Right lobe of liver (tissue), 6 donors: ENCODE measurements at regions of chr5 and their contacts with region 1.

Region 1: DNA sequence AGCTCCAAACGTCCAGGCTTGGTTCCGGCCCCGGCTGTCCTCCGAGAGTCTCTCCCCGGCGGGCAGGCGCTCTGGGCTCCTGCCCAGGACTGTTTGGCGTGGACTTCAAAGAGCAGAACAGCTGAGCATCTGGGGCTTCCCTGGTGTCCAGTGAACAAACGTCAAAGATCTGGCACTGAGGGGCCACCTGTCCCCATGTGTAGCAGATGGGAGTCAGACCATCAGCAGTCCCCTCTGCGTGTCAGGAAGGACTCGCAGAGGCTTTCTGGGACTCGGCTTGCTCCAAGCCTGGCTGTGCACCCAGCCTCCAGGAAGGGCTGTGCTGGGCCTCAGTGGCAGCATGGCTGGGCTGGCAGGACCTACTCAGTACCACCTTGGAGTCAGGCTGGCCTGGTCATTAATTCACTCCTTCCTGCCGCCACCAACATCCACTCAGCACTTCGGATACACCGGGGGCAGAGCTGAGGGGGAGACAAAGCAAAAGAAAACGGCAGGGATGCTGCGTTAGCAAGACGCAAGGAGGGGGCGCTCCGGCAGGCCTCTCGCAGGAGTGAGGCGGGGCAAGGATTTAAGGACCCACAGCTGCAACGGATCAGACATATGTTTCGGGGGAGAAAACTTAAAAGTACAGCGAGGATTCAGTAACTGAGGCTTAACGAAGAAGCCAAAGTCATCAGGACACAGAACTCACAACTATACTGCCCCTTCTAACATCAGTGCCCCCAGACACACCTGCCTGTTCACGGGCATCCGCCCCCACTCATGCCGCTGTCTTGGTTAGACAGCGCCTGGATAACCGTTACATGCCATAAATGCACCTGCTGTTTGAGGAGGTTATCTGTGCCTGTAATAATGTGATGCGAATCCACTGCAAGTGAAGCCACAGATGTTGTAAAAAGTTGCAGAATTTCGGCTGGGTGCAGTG is 164.5 kb upstream of the PHYKPL start:
- DNase-seq: peak in 1 of 3 donors; percentile 20
- ATAC-seq: no peak
- H3K4me3 ChIP-seq: no peak overlapping the region
- H3K27ac ChIP-seq: no peak overlapping the region
- H3K4me1 ChIP-seq: no peaks in the 10 kb centered on the region
- H3K27me3 ChIP-seq: no peaks in the 10 kb centered on the region
- CTCF ChIP-seq: no peak
- POLR2A ChIP-seq: no peak

Region 2: GRCh38 chr5:177982072-177982727 is 414.9 kb before region 1 on chr5:
- intact Hi-C with region 1: no loop called
- DNase-seq: no peak
- ATAC-seq: peak in 2 of 4 donors; percentile 10 to 41
- H3K4me3 ChIP-seq: no peak overlapping the region
- H3K27ac ChIP-seq: no peak overlapping the region
- H3K4me1 ChIP-seq: no peaks in the 10 kb centered on the region
- H3K27me3 ChIP-seq: peaks cover 0 to 8% of the 10 kb centered on the region in 2 donors
- CTCF ChIP-seq: no peak
- POLR2A ChIP-seq: no peak

Region 3: GRCh38 chr5:178340187-178340586 is 56.9 kb before region 1 on chr5:
- intact Hi-C with region 1: loop called in 1 of 2 experiments (anchors 10 kb)
- DNase-seq: peak in 2 of 3 donors; percentile 27 to 31
- ATAC-seq: no peak
- H3K4me3 ChIP-seq: no peak overlapping the region
- H3K27ac ChIP-seq: no peak overlapping the region
- H3K4me1 ChIP-seq: peaks cover 0 to 38% (median 15%) of the 10 kb centered on the region in 4 donors
- H3K27me3 ChIP-seq: no peaks in the 10 kb centered on the region
- CTCF ChIP-seq: no peak
- POLR2A ChIP-seq: no peak

Region 4: DNA sequence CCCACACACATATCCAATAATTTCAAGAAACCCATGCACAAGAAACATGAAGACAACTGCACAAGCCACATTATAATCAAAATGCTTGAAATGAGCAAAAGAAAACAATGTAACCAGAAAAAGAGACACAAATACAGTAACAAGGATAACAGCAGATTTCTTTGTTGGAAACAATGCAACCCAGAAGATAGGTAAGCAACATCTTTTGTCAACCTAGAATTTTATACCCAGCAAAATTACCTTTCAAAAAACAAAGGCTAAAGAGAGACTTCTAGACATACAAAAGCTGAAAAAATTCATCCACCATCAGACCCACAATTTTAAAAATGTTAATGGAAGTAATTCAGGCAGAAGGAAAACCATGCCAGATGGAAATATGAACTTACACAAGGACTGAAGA is 198.1 kb after region 1 on chr5:
- intact Hi-C with region 1: no loop called
- DNase-seq: no peak
- ATAC-seq: no peak
- H3K4me3 ChIP-seq: no peak overlapping the region
- H3K27ac ChIP-seq: no peak overlapping the region
- H3K4me1 ChIP-seq: peaks cover 0 to 9% (median 0%) of the 10 kb centered on the region in 4 donors
- H3K27me3 ChIP-seq: no peaks in the 10 kb centered on the region
- CTCF ChIP-seq: no peak
- POLR2A ChIP-seq: no peak